Activated T-helper 2 cell treated with anti-CD3 and anti-CD28 coated beads, Interferon-gamma antibody, Interleukin-2, Interleukin-4, amounts not matched to agents 10 μg/mL and 5 μg/mL and 100 μg/mL, durations not matched to agents 14 hours and 24 hours and 36 hours (primary cell): ENCODE measurements at regions of chr16 and their contacts with region 1.

Region 1: GRCh38 chr16:67428146-67428731 is 2.7 kb upstream of the HSD11B2 start:
- DNase-seq: peak; percentile 44
- H3K4me3 Mint-ChIP-seq: no peak overlapping the region
- H3K27ac Mint-ChIP-seq: no peak overlapping the region
- H3K4me1 Mint-ChIP-seq: peaks cover 5% of the 10 kb centered on the region
- H3K27me3 Mint-ChIP-seq: peaks cover 51% of the 10 kb centered on the region

Region 2: GRCh38 chr16:67356396-67356795 is 71.8 kb before region 1 on chr16:
- intact Hi-C with region 1: no loop called
- DNase-seq: no peak
- H3K4me3 Mint-ChIP-seq: no peak overlapping the region
- H3K27ac Mint-ChIP-seq: no peak overlapping the region
- H3K4me1 Mint-ChIP-seq: peaks cover 7% of the 10 kb centered on the region
- H3K27me3 Mint-ChIP-seq: peaks cover 21% of the 10 kb centered on the region

Region 3: DNA sequence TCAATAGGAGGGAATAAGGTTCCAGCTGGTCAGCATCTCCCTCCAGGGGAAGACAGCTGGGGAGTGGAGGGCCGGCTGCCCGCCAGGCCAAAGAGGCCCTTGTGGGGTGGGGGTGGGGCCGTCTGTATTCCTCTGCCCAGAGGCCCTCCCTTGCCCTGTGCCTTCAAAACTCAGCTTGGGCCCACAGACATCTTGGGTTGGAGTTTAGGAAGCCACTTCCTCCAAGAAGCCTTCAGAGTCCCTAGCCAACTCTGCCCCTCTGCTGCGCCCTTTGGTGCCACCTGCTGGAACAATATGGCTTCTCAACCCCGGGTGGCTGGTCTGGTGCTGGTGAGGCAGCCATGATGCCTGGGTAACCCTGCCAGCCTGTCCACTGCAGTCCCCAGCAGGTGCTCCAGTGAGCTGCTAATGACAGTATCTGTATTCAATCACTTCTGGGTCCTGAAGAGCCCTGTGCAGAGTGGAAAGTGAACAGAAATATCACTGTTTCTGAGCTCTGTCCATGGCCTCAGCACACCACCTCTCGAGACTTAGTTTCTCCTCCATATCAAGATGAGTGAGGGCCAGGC is 19.4 kb after region 1 on chr16:
- intact Hi-C with region 1: loop called (anchors 2 kb)
- DNase-seq: peak; percentile 64
- H3K4me3 Mint-ChIP-seq: no peak overlapping the region
- H3K27ac Mint-ChIP-seq: no peak overlapping the region
- H3K4me1 Mint-ChIP-seq: peaks cover 3% of the 10 kb centered on the region
- H3K27me3 Mint-ChIP-seq: no peaks in the 10 kb centered on the region

Region 4: DNA sequence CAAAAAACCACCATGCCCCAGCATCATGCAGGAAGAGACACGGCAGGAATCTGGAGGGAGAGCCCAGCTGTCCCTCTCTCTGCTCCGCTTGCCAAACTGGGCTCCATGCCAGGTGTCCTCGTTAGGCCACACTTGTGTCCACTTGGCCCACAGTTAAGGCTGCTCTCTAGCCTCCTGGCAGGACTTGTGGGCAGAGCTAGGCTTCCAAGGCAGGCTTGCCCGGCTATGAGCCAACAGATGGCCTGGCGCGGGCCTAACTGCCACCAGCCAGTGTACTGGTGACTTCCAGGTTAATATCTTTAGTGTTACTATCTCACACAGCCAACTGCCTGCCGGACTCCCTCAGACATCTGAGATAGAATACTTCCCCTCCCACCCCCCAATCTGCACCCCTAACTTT is 42.1 kb after region 1 on chr16:
- intact Hi-C with region 1: loop called (anchors 1 kb)
- DNase-seq: no peak
- H3K4me3 Mint-ChIP-seq: no peak overlapping the region
- H3K27ac Mint-ChIP-seq: no peak overlapping the region
- H3K4me1 Mint-ChIP-seq: peaks cover 4% of the 10 kb centered on the region
- H3K27me3 Mint-ChIP-seq: no peaks in the 10 kb centered on the region